GM10248 (cell line): ENCODE measurements at regions of chr16 and their contacts with region 1.

Region 1: GRCh38 chr16:66872943-66873684 is 7.2 kb upstream of the PDP2 start:
- DNase-seq: peak; percentile 88
- CTCF ChIP-seq: peak; percentile 96

Region 2: DNA sequence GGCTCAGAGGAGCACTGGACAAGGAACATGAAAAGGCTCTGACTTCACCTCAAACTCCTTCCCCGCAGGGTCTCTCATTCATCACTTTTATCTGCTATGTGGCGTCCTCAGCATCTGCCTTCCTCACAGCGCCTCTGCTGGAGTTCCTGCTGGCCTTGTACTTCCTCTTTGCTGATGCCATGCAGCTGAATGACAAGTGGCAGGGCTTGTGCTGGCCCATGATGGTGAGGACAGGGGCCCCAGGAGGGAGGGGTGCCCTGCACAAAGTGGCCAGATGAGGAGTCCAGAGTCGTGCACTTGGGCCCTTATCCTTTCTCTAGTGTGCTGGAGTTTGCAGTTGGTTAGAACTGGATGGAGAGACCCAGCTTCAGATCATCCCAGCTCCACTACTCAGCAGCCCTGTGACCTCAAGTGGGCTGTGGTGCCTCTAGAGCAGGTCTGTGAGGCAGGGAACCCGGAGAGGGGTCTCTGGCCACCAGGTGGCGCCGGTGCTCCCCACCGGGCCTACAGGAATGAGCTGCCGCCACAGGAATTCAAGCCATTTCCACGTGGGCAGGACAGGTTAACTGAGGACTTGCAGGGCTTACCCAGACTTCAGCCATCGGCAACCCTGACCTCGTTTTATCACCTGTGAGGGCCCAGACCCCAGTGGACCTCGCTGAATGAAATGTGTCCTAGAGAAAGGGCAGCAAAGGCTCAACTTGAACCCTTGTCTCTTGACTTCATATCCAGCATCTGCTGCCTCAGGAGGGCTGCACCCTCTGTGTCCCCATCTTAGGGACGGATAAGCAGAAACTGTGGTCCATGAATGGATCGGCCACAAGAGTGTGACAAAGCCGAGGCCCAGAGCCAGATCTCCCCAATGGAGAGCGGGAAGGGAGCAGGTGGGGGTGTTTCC is 264.6 kb before region 1 on chr16:
- CTCF ChIA-PET with region 1: interaction called, 40 read pairs
- POLR2A ChIA-PET with region 1: no interaction called
- DNase-seq: peak; percentile 90
- CTCF ChIP-seq: peak; percentile 86

Region 3: DNA sequence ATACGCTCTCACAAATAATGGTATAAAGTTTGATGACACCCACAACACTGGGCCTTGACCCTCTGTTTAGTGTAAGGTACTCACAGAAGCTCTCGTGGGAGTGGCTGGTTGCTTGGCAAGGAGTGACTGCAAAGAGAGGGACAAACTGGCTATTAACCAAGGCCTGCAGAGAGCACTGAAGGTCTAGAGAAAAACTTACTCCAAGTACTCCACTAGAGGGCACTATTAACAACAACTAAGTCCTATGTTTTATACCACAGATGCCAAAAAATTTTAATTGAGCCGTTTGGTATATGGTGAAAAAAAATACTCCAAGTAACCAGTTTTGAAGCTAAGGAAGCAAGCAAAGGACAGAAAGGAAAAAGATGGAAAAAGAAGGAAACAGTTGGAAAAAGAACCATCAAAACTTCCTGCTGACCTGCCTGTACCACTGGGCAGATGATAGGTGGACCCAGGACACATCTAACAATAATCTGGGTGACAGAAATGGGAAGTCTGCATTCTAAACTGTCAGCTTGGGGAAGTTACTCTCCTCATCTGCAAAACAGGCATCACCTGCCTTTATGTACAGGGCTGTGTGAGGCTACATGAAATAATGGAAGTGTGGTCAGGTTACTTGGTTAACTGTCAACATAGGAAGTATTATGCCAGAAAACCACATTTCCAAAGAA is 144.9 kb before region 1 on chr16:
- CTCF ChIA-PET with region 1: interaction called, 37 read pairs
- POLR2A ChIA-PET with region 1: no interaction called
- DNase-seq: peak; percentile 67
- CTCF ChIP-seq: peak; percentile 58

Region 4: DNA sequence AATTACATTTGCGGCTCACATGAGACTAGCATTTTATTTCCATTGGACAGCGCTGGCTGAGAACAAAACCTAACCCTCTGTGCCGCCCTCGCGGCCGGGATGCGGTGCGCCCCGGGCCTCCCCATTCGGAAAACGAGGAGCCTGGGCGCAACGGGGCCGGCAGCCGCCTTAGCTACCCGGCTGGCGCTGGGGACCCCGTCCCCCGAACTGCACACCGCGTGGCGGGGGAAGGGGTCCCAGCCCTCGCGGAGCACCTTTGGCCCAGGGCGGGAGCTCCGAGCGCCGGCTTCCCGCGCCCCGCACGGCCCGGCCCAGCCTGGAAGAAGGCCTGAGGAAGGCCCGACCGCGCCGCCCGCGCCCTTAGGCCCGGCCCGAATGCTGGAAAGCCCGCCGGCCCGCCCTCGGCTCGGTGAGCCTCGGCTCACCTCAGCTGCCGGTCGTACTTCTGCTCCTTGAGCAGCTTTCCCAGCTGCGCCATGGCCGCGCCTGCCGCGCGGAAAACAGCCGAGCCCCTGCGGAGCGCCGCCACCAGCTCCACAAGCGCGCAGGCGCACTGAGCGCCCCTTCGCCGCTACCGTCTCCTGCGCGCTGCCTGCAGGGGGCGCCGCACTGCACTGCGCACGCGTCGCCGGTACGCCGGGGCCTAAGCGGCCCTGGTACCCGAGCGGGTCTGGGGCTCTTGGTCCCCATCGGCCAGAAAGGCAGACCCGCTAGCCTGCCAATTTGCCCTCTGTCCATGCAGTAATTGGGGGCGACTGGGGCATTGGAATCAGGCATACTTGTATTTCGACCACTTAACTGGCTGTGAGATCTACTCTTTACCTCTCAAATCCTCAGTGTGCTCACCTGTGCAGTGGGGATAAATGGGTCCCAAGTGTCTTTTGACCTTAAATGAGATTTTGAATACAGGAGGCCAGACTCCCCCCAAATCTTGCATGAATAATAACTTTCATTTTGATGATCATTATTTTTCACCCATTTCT is 42.4 kb before region 1 on chr16 and contains the start of gene NAE1:
- CTCF ChIA-PET with region 1: interaction called, 80 read pairs
- POLR2A ChIA-PET with region 1: interaction called, 8 read pairs
- DNase-seq: peak; percentile 96
- CTCF ChIP-seq: peak; percentile 99

Region 5: GRCh38 chr16:66858740-66859396 is 14.2 kb before region 1 on chr16:
- CTCF ChIA-PET with region 1: interaction called, 176 read pairs
- POLR2A ChIA-PET with region 1: no interaction called
- DNase-seq: no peak
- CTCF ChIP-seq: no peak